ENCODE measurements at regions of chr3 and their contacts with region 1.

Region 1: GRCh38 chr3:19250959-19251610 is 102.8 kb downstream of the KCNH8 start:
- DNase-seq: peak; percentile 1
- ATAC-seq: no peak
- H3K4me3 ChIP-seq: no peak overlapping the region
- H3K27ac ChIP-seq: no peak overlapping the region
- H3K4me1 ChIP-seq: no peaks in the 10 kb centered on the region
- H3K27me3 ChIP-seq: no peaks in the 10 kb centered on the region
- CTCF ChIP-seq: peak; percentile 17; the same call in 1 of the 2 replicates
- EP300 ChIP-seq: no peak
- POLR2A ChIP-seq: no peak
- RAD21 ChIP-seq: no peak

Region 2: DNA sequence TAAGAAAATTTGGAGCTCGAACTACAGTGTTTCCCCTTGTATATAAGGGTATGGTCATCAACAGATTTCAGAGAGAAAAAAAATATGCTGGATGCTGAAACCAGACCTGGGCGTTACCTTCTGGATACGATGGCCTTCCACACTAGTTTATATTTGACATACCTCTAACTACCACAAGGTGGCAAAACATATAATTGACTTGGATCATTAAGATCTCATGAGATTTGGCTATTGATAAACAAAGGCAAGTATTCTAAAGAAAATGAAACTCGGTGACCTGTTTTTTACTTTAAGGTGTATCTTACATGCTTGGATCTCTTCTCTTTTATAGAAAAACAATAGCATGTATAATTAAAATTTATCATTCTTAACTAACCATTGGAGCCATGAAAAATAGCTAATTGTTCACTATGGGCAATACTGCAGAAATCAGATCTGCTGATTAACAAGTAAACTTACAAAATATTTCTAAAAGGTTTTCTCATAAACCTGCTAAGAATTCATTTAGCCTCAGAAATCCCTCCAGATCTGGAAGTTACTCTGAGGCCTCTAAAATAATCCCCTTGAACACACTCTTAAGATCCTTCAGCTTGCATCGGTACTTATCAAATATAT is 403.4 kb before region 1 on chr3:
- CTCF ChIA-PET with region 1: no interaction called
- POLR2A ChIA-PET with region 1: no interaction called
- in situ Hi-C with region 1: no loop called
- intact Hi-C with region 1: loop called (anchors 5 kb)
- DNase-seq: peak; percentile 10
- ATAC-seq: peak; percentile 56; the same call in 2 of the 3 replicates
- H3K4me3 ChIP-seq: no peak overlapping the region
- H3K27ac ChIP-seq: no peak overlapping the region
- H3K4me1 ChIP-seq: no peaks in the 10 kb centered on the region
- H3K27me3 ChIP-seq: no peaks in the 10 kb centered on the region
- CTCF ChIP-seq: peak; percentile 25; the same call in 1 of the 2 replicates
- EP300 ChIP-seq: no peak
- POLR2A ChIP-seq: no peak
- RAD21 ChIP-seq: no peak

Region 3: DNA sequence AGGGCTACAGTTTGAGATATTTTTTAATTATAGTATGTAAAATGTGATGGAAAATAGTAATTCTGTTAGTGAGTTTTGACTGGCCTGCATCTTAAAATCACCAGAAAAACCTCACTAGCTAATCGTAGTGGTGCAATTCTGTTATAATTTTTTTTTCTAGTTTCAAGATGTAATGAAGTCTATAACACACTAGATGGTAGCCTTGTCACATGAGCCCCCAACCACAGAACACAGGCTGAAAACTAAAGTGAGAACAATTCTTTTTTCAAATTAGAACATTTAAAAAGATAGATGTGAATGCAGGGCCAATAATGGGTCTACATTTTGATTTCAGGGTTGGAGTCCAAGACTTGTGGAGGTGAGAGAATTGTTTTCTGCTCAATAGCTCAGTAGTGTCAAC is 186.1 kb before region 1 on chr3:
- CTCF ChIA-PET with region 1: no interaction called
- POLR2A ChIA-PET with region 1: no interaction called
- in situ Hi-C with region 1: no loop called
- intact Hi-C with region 1: loop called (anchors 1 kb)
- DNase-seq: peak; percentile 10
- ATAC-seq: no peak
- H3K4me3 ChIP-seq: no peak overlapping the region
- H3K27ac ChIP-seq: no peak overlapping the region
- H3K4me1 ChIP-seq: no peaks in the 10 kb centered on the region
- H3K27me3 ChIP-seq: no peaks in the 10 kb centered on the region
- CTCF ChIP-seq: peak; percentile 58
- EP300 ChIP-seq: no peak
- POLR2A ChIP-seq: no peak
- RAD21 ChIP-seq: peak; percentile 41; the same call in 1 of the 2 replicates

Region 4: GRCh38 chr3:19146685-19147650 is 104.1 kb before region 1 on chr3:
- CTCF ChIA-PET with region 1: no interaction called
- POLR2A ChIA-PET with region 1: no interaction called
- in situ Hi-C with region 1: no loop called
- intact Hi-C with region 1: no loop called
- DNase-seq: peak; percentile 25
- ATAC-seq: peak; percentile 90
- H3K4me3 ChIP-seq: peak overlapping the region; percentile 47 to 60 (median 50)
- H3K27ac ChIP-seq: no peak overlapping the region
- H3K4me1 ChIP-seq: no peaks in the 10 kb centered on the region
- H3K27me3 ChIP-seq: peaks cover 0 to 6% of the 10 kb centered on the region in 2 experiments; a peak in 1 of 5 replicates
- CTCF ChIP-seq: 0 out of 2 replicates have a peak, but pooled peaks have one; percentile 13
- EP300 ChIP-seq: no peak
- POLR2A ChIP-seq: no peak
- RAD21 ChIP-seq: no peak